ENCODE measurements at regions of chr3 and their contacts with region 1.

Region 1: DNA sequence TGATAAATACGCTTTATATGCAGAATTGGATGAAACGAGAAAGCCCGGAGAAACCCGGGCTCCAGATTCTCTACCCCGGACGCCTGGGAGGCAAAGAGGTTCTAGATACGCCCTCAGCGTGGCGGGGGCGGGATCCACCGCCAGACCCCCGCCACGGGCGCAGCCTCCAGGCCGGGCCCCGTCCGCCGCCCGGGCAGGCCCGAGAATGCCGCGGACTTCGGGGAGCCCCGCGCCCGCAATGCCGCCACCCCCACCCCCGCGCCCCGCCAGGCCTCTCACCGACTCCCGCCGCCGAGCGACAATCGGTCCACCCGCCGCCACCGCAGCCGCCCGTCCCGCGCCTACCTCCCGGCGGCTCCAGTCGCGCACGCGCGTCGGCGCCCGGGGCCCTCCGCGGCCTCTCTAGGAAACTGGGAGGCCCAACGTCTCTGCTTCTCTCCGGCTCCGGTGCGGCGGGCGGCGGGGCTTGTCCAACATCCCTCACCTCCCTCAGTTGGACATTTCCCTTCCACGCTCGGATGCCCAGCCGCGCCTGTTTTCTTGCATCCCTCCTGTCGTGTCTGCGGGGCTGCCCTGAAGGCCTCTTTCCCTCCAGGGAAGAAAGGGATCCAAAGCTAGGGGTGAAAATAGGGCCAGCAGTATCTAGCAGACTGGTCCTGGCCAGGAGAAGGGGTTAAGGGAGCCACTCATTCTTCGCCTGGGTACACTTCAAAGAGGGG is at the start of gene ZNF445:
- DNase-seq: peak; percentile 76
- H3K4me3 Mint-ChIP-seq: peak within 1 kb of the TSS; percentile 91
- H3K27ac Mint-ChIP-seq: peak within 1 kb of the TSS; percentile 82
- H3K4me1 Mint-ChIP-seq: peaks cover 27% of the 10 kb centered on the region
- H3K27me3 Mint-ChIP-seq: no peaks in the 10 kb centered on the region
- total RNA-seq, gene ZNF445: 22.6 and 24.0 TPM in 2 replicates

Region 2: DNA sequence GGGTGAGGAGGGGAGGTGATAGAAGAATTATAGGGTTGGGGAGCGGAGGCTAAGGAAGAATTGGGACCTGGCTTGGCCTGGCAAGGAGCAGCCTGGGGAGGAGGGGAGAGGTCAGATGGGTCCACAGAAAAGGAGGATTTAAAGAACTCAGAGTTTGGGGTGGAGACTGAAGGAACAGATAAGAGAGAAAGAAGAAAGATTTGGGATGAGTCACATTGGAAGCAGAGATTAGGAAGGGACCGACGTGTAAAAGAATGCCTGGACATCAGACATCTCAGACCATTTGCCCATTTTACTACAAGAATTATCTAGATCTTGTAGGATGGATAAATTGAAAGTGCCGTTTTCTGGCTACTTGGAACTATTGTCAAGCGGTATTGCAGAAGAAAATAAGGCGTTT is 128.5 kb before region 1 on chr3:
- intact Hi-C with region 1: no loop called
- DNase-seq: no peak
- H3K4me3 Mint-ChIP-seq: no peak overlapping the region
- H3K27ac Mint-ChIP-seq: no peak overlapping the region
- H3K4me1 Mint-ChIP-seq: peaks cover 4% of the 10 kb centered on the region
- H3K27me3 Mint-ChIP-seq: no peaks in the 10 kb centered on the region

Region 3: GRCh38 chr3:44510000-44510368 is 32.5 kb after region 1 on chr3:
- intact Hi-C with region 1: loop called (anchors 1 kb)
- DNase-seq: no peak
- H3K4me3 Mint-ChIP-seq: peak overlapping the region; percentile 93
- H3K27ac Mint-ChIP-seq: peak overlapping the region; percentile 84
- H3K4me1 Mint-ChIP-seq: peaks cover 19% of the 10 kb centered on the region
- H3K27me3 Mint-ChIP-seq: no peaks in the 10 kb centered on the region